PC-9 (cell line): ENCODE measurements at regions of chr11 and their contacts with region 1.

Region 1: GRCh38 chr11:71232364-71232763 is 20.0 kb downstream of the SHANK2 start:
- DNase-seq: no peak
- H3K4me3 ChIP-seq: no peak overlapping the region
- H3K27ac ChIP-seq: no peak overlapping the region
- H3K4me1 ChIP-seq: no peaks in the 10 kb centered on the region
- H3K27me3 ChIP-seq: no peaks in the 10 kb centered on the region
- CTCF ChIP-seq: no peak

Region 2: GRCh38 chr11:71212871-71213559 is 19.3 kb before region 1 on chr11:
- CTCF ChIA-PET with region 1: no interaction called
- POLR2A ChIA-PET with region 1: no interaction called
- intact Hi-C with region 1: loop called (anchors 1 kb)
- DNase-seq: no peak
- H3K4me3 ChIP-seq: no peak overlapping the region
- H3K27ac ChIP-seq: no peak overlapping the region
- H3K4me1 ChIP-seq: no peaks in the 10 kb centered on the region
- H3K27me3 ChIP-seq: no peaks in the 10 kb centered on the region
- CTCF ChIP-seq: no peak

Region 3: GRCh38 chr11:71302911-71303310 is 70.5 kb after region 1 on chr11:
- CTCF ChIA-PET with region 1: no interaction called
- POLR2A ChIA-PET with region 1: no interaction called
- intact Hi-C with region 1: no loop called
- DNase-seq: peak in 1 of 2 experiments; percentile 66
- H3K4me3 ChIP-seq: no peak overlapping the region
- H3K27ac ChIP-seq: no peak overlapping the region
- H3K4me1 ChIP-seq: peaks cover 45% of the 10 kb centered on the region
- H3K27me3 ChIP-seq: no peaks in the 10 kb centered on the region
- CTCF ChIP-seq: peak; percentile 51

Region 4: DNA sequence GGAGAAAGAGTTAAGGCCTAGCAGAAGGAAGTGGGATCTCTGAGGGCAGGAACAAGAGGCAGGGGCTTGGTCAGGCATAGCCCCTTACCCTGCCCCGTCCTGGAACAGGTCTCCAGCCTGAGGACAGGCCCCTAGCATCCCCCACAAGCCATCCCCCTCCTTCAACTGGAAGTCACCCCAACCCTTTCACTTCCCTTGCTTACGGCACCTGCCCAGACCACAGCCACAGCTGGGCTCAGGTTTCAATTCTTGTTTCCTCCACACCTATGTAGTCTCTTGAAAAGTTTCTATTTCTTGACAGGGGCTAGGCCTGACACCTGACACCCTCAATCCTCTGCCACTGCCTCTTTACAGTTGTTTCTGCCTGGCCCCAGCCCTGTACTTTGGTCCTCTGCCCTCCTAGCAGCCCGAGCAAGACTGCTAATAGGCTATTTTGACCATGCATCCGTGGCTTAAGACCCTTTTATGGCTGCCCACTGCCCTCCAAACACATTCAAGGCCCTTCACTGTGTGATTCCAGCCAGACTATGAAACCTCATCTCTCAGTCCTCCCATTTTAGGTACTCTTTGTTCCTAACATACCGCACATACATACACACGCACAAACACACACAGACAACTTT is 1920.6 kb after region 1 on chr11:
- CTCF ChIA-PET with region 1: no interaction called
- POLR2A ChIA-PET with region 1: no interaction called
- intact Hi-C with region 1: no loop called
- DNase-seq: peak; percentile 57 to 66
- H3K4me3 ChIP-seq: no peak overlapping the region
- H3K27ac ChIP-seq: no peak overlapping the region
- H3K4me1 ChIP-seq: peaks cover 24% of the 10 kb centered on the region
- H3K27me3 ChIP-seq: no peaks in the 10 kb centered on the region
- CTCF ChIP-seq: no peak